Left lung (tissue), 14 donors: ENCODE measurements at regions of chr6 and their contacts with region 1.

Region 1: DNA sequence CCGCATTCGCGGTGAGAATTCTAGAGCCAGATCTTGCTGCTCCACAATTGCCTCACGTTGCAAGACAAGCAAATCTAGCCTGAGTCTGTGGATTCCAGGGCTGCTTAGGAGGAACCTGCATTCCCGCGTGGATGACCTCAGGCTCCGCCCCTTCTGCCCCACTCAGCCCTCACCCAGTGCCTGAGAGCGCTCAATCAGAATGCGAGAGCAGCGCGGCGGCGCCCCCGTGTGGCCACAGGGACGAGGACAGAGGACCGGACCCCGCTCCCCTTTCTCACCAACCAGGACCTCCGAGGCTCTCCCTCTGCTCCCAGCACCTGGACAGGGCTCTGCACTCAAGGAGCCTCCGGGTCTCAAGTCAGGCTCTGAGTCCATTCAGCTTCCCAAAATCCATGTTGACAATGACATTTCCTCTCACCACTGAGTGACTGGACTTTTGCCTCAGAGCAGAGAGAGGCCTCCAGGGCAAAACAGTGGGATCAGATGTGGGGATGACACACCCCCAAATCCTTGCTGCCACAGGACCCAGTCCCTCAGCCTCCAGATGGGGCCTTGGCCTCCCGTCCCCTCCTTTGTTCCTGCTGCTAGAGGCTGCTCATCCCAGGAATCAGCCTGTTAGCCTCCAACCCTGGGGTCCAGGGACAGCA is 52.0 kb downstream of the RPP21 start:
- DNase-seq: peak; percentile 36 to 97 (median 78)
- ATAC-seq: peak; percentile 100
- H3K4me3 ChIP-seq: no peak overlapping the region
- H3K27ac ChIP-seq: no peak overlapping the region
- H3K4me1 ChIP-seq: peaks cover 0 to 5% of the 10 kb centered on the region in 2 donors
- H3K27me3 ChIP-seq: peaks cover 15 to 57% of the 10 kb centered on the region in 2 donors
- CTCF ChIP-seq: peak; percentile 69 to 87

Region 2: GRCh38 chr6:30227763-30228487 is 169.0 kb before region 1 on chr6:
- intact Hi-C with region 1: loop called in 1 of 2 experiments (anchors 10 kb)
- DNase-seq: no peak
- ATAC-seq: no peak
- H3K4me3 ChIP-seq: no peak overlapping the region
- H3K27ac ChIP-seq: no peak overlapping the region
- H3K4me1 ChIP-seq: no peaks in the 10 kb centered on the region
- H3K27me3 ChIP-seq: no peaks in the 10 kb centered on the region
- CTCF ChIP-seq: no peak

Region 3: GRCh38 chr6:30244560-30244959 is 152.4 kb before region 1 on chr6:
- intact Hi-C with region 1: loop called in 1 of 2 experiments (anchors 5 kb)
- DNase-seq: no peak
- ATAC-seq: no peak
- H3K4me3 ChIP-seq: no peak overlapping the region
- H3K27ac ChIP-seq: no peak overlapping the region
- H3K4me1 ChIP-seq: no peaks in the 10 kb centered on the region
- H3K27me3 ChIP-seq: peaks cover 0 to 4% of the 10 kb centered on the region in 2 donors
- CTCF ChIP-seq: no peak